ENCODE measurements at regions of chr20 and their contacts with region 1.

Region 1: DNA sequence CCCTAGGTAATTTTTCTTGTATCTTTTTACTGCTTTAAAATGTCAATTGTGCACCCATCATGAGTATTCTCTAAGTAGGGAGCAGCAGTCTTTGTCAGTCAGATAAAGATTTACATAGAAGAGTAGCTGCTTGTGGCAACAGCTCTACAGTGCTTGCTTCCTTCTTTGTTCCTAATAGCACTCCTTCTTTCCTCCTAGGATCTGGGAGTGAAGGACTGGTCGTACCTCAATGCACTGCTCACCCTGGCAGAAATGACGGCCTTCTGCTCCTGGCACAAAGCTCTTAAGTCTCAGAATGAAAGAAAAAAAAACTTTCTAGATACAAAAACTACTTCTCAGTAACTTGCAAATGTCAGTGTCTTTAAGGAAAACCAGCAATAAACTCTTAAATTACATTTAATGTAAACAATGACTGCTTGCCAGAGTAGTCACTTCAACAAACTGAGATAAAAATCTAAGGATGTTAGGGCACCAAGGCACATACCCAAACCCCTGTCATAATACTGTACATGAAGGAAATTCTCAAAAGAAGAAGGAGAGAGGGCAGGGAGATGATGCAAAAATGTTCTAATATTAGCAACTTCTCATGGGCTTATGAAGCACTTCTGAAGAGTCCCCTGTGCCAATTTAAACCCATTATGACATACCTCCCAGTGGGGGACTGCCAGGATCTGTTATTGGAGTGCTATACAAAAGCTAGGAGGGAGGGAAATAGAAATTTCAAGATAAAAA is 34.0 kb downstream of the NCOA6 start:
- DNase-seq: no peak
- ATAC-seq: no peak
- H3K4me3 ChIP-seq: no peak overlapping the region
- H3K27ac ChIP-seq: no peak overlapping the region
- H3K4me1 ChIP-seq: no peaks in the 10 kb centered on the region
- H3K27me3 ChIP-seq: no peaks in the 10 kb centered on the region
- CTCF ChIP-seq: no peak

Region 2: GRCh38 chr20:34604980-34605788 is 186.3 kb before region 1 on chr20:
- CTCF ChIA-PET with region 1: no interaction called
- POLR2A ChIA-PET with region 1: interaction called, 16 read pairs
- in situ Hi-C with region 1: no loop called
- intact Hi-C with region 1: no loop called
- DNase-seq: no peak
- ATAC-seq: no peak
- H3K4me3 ChIP-seq: no peak overlapping the region
- H3K27ac ChIP-seq: no peak overlapping the region
- H3K4me1 ChIP-seq: no peaks in the 10 kb centered on the region
- H3K27me3 ChIP-seq: no peaks in the 10 kb centered on the region
- CTCF ChIP-seq: no peak

Region 3: GRCh38 chr20:34815636-34816035 is 24.2 kb after region 1 on chr20:
- CTCF ChIA-PET with region 1: interaction called, 7 read pairs
- POLR2A ChIA-PET with region 1: interaction called, 12 read pairs
- in situ Hi-C with region 1: no loop called
- intact Hi-C with region 1: no loop called
- DNase-seq: no peak
- ATAC-seq: no peak
- H3K4me3 ChIP-seq: no peak overlapping the region
- H3K27ac ChIP-seq: no peak overlapping the region
- H3K4me1 ChIP-seq: peaks cover 10% of the 10 kb centered on the region; the same call in 1 of the 2 replicates
- H3K27me3 ChIP-seq: no peaks in the 10 kb centered on the region
- CTCF ChIP-seq: no peak

Region 4: GRCh38 chr20:34842143-34842542 is 50.7 kb after region 1 on chr20:
- CTCF ChIA-PET with region 1: no interaction called
- POLR2A ChIA-PET with region 1: no interaction called
- in situ Hi-C with region 1: no loop called
- intact Hi-C with region 1: no loop called
- DNase-seq: no peak
- ATAC-seq: no peak
- H3K4me3 ChIP-seq: no peak overlapping the region
- H3K27ac ChIP-seq: no peak overlapping the region
- H3K4me1 ChIP-seq: no peaks in the 10 kb centered on the region
- H3K27me3 ChIP-seq: no peaks in the 10 kb centered on the region
- CTCF ChIP-seq: no peak

Measured in Panc1 (cell line).